CD8-positive, alpha-beta T cell (primary cell): ENCODE measurements at regions of chr6 and their contacts with region 1.

Region 1: DNA sequence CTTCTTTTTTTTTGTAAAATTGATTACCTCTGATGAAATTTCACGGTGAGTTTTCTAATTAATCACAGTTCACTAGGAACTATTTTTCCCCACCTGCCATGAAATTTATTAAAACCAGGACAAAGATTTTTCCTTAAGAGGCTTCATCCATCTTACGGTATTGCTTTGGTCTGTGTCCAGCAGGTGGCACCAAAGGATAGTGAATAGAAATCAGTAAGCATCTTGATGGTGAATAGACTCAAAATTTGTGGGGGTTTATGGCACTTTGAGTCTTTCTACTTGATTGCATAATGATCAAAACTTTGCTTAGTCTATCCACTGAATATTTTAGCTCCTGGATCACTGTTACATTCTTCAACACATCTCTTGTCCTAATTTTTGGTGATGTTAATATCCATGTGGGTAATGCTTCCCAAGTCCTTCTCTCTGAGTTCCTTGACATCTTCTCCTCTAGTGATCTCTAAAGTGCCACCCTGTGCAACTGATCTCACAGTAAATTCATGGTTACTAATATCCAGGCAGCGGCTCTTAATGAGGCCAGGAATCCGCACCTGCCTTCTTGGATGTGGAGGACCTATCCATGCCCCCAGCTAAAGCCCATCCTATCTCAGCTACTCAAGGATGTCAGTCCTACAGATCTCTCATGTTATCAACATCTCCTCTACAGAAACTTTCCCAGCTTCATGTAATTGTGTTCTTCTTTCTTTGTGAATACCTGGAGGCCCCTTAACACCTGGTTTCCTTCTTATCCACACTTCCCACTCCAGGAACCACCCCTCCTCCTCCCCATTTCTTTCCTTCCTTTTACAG is 54.5 kb downstream of the STMND1 start:
- DNase-seq: peak; percentile 10 to 78 (median 67)
- ATAC-seq: peak; percentile 52
- H3K4me3 ChIP-seq: no peak overlapping the region
- H3K4me3 Mint-ChIP-seq: no peak overlapping the region
- H3K27ac ChIP-seq: no peak overlapping the region
- H3K27ac Mint-ChIP-seq: no peak overlapping the region
- H3K4me1 ChIP-seq: no peaks in the 10 kb centered on the region
- H3K4me1 Mint-ChIP-seq: no peaks in the 10 kb centered on the region
- H3K27me3 ChIP-seq: no peaks in the 10 kb centered on the region
- H3K27me3 Mint-ChIP-seq: peaks cover 12% of the 10 kb centered on the region
- CTCF ChIP-seq: peak; percentile 90

Region 2: GRCh38 chr6:16956361-16956760 is 200.0 kb before region 1 on chr6:
- CTCF ChIA-PET with region 1: no interaction called
- POLR2A ChIA-PET with region 1: no interaction called
- intact Hi-C with region 1: no loop called
- DNase-seq: peak in 3 of 9 experiments; percentile 28 to 52 (median 34)
- ATAC-seq: peak; percentile 94
- H3K4me3 ChIP-seq: no peak overlapping the region
- H3K4me3 Mint-ChIP-seq: no peak overlapping the region
- H3K27ac ChIP-seq: no peak overlapping the region
- H3K27ac Mint-ChIP-seq: peak overlapping the region; percentile 23
- H3K4me1 ChIP-seq: no peaks in the 10 kb centered on the region
- H3K4me1 Mint-ChIP-seq: peaks cover 9% of the 10 kb centered on the region
- H3K27me3 ChIP-seq: no peaks in the 10 kb centered on the region
- H3K27me3 Mint-ChIP-seq: peaks cover 2% of the 10 kb centered on the region
- CTCF ChIP-seq: no peak

Region 3: GRCh38 chr6:17808609-17809008 is 652.3 kb after region 1 on chr6:
- CTCF ChIA-PET with region 1: interaction called, 7 read pairs
- POLR2A ChIA-PET with region 1: no interaction called
- intact Hi-C with region 1: loop called (anchors 1 kb)
- DNase-seq: no peak
- ATAC-seq: no peak
- H3K4me3 ChIP-seq: no peak overlapping the region
- H3K4me3 Mint-ChIP-seq: no peak overlapping the region
- H3K27ac ChIP-seq: no peak overlapping the region
- H3K27ac Mint-ChIP-seq: no peak overlapping the region
- H3K4me1 ChIP-seq: no peaks in the 10 kb centered on the region
- H3K4me1 Mint-ChIP-seq: peaks cover 3% of the 10 kb centered on the region
- H3K27me3 ChIP-seq: no peaks in the 10 kb centered on the region
- H3K27me3 Mint-ChIP-seq: peaks cover 19% of the 10 kb centered on the region
- CTCF ChIP-seq: no peak

Region 4: DNA sequence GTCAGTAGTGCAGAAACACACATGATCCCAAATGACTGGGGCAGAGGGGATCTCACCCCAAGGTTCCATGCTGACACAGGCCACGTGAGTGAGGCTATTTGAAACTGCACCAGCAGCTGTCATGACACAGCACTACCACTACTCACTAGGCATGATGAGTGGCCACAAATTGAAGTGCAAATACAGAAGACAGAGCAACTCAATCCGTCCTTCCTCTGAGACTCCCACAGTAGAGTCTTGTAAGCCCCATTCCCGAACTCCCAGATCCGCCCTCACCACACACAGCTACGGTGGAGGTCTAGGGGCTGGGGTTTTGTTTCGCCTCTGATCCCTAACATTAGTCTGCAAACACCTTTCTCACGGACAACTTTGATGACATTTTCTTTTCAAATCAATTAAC is 663.7 kb after region 1 on chr6:
- CTCF ChIA-PET with region 1: interaction called, 7 read pairs
- POLR2A ChIA-PET with region 1: no interaction called
- intact Hi-C with region 1: loop called (anchors 1 kb)
- DNase-seq: no peak
- ATAC-seq: no peak
- H3K4me3 ChIP-seq: no peak overlapping the region
- H3K4me3 Mint-ChIP-seq: no peak overlapping the region
- H3K27ac ChIP-seq: no peak overlapping the region
- H3K27ac Mint-ChIP-seq: no peak overlapping the region
- H3K4me1 ChIP-seq: no peaks in the 10 kb centered on the region
- H3K4me1 Mint-ChIP-seq: no peaks in the 10 kb centered on the region
- H3K27me3 ChIP-seq: peaks cover 0 to 3% of the 10 kb centered on the region in 2 experiments
- H3K27me3 Mint-ChIP-seq: peaks cover 10% of the 10 kb centered on the region
- CTCF ChIP-seq: no peak

Region 5: DNA sequence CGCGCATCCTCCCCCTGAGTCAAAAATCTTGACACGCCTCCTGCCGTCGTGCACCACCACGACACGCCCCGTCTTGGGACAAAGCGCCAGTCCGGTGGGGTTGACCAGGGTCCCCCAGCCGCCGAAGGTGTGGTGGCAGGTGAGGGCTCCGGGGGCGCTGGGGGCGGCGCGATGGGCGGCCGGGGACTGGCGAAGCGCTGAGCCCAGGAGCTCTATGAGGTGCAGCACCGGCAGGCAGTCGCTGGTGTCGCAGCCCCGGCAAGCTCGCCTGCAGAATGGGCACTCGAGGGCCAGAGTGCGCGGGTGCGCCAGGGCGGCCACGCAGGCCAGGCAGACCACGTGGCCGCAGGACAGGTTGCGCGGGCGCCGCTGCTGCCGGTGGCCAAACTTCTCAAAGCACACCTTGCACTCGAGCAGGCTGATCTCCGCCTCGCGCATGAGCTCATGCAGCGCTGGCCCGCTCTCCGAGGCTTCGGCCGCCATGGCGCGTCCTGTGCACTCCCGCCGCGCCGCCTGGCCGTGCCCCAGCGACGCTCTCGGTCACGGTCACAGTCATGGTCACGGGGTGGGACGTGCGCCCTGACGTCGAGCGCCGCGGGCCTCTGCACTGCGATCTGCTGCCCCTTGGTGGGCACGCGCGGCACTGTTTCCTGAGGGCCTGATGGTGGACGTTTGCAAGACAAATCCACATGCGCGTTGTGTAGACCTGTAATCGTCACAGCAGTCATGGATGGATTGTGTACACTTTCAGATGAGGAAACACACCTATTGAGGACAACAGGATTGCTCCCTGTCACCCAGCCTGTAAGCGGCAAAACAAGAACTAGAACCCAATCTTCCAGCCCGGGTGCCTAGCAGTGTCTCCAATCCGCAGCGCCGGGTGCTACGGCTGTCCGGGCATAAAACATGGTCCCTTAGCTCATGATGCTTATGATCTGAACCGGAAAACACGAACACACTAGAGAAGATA is 966.1 kb after region 1 on chr6 and contains the start of gene NHLRC1:
- CTCF ChIA-PET with region 1: interaction called, 3 read pairs
- POLR2A ChIA-PET with region 1: no interaction called
- intact Hi-C with region 1: loop called in 1 of 2 experiments (anchors 1 kb)
- DNase-seq: peak; percentile 46 to 83 (median 74)
- ATAC-seq: peak; percentile 99
- H3K4me3 ChIP-seq: peak within 1 kb of the TSS; percentile 38 to 62
- H3K4me3 Mint-ChIP-seq: peak within 1 kb of the TSS; percentile 85
- H3K27ac ChIP-seq: no peak within 1 kb of the TSS
- H3K27ac Mint-ChIP-seq: peak within 1 kb of the TSS; percentile 22
- H3K4me1 ChIP-seq: peaks cover 4% of the 10 kb centered on the region
- H3K4me1 Mint-ChIP-seq: peaks cover 13% of the 10 kb centered on the region
- H3K27me3 ChIP-seq: no peaks in the 10 kb centered on the region
- H3K27me3 Mint-ChIP-seq: peaks cover 4% of the 10 kb centered on the region
- CTCF ChIP-seq: peak; percentile 65
- total RNA-seq, gene NHLRC1: 0.28 TPM in 1 of 2 experiments, not detected in the other

Region 6: DNA sequence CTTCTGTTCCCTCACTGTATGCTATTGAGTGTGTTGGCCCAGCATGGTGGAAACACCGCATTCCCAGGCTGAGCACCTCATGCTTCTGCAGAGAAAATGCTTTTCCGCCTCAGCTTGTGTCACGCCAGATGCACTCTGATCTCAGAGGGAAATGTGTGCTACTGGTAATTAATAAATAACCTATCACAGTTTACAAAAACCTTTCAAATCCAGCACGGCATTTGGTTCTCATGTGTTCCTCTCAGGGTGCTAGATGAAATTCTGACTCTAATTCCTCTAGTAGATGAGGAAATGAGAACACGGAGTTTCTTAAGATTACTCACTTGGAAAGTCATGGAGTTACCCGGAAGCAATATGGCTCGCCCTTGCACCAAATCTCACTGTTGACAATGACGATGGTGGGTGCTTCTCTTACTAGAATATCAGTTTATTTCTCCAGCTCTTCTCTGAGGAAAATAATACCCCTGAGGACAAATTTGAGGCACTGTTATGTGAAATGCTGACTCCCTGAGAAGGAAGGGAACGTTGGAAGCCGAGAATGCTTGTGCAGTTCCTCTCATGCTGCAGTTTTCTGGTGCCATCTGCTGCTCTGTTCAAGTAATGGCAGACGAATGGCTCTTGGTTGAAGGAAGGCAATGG is 1347.4 kb after region 1 on chr6:
- CTCF ChIA-PET with region 1: interaction called, 4 read pairs
- POLR2A ChIA-PET with region 1: no interaction called
- intact Hi-C with region 1: loop called in 1 of 2 experiments (anchors 1 kb)
- DNase-seq: peak in 6 of 9 experiments; percentile 7 to 62 (median 27)
- ATAC-seq: no peak
- H3K4me3 ChIP-seq: no peak overlapping the region
- H3K4me3 Mint-ChIP-seq: no peak overlapping the region
- H3K27ac ChIP-seq: no peak overlapping the region
- H3K27ac Mint-ChIP-seq: no peak overlapping the region
- H3K4me1 ChIP-seq: no peaks in the 10 kb centered on the region
- H3K4me1 Mint-ChIP-seq: peaks cover 2% of the 10 kb centered on the region
- H3K27me3 ChIP-seq: no peaks in the 10 kb centered on the region
- H3K27me3 Mint-ChIP-seq: no peaks in the 10 kb centered on the region
- CTCF ChIP-seq: peak; percentile 82

Region 7: GRCh38 chr6:18595774-18596530 is 1439.6 kb after region 1 on chr6:
- CTCF ChIA-PET with region 1: no interaction called
- POLR2A ChIA-PET with region 1: no interaction called
- intact Hi-C with region 1: loop called in 1 of 2 experiments (anchors 5 kb)
- DNase-seq: peak in 7 of 9 experiments; percentile 10 to 56 (median 45)
- ATAC-seq: no peak
- H3K4me3 ChIP-seq: no peak overlapping the region
- H3K4me3 Mint-ChIP-seq: no peak overlapping the region
- H3K27ac ChIP-seq: no peak overlapping the region
- H3K27ac Mint-ChIP-seq: no peak overlapping the region
- H3K4me1 ChIP-seq: no peaks in the 10 kb centered on the region
- H3K4me1 Mint-ChIP-seq: peaks cover 4% of the 10 kb centered on the region
- H3K27me3 ChIP-seq: no peaks in the 10 kb centered on the region
- H3K27me3 Mint-ChIP-seq: peaks cover 16% of the 10 kb centered on the region
- CTCF ChIP-seq: peak; percentile 98